ENCODE measurements at regions of chr17 and their contacts with region 1.

Region 1: DNA sequence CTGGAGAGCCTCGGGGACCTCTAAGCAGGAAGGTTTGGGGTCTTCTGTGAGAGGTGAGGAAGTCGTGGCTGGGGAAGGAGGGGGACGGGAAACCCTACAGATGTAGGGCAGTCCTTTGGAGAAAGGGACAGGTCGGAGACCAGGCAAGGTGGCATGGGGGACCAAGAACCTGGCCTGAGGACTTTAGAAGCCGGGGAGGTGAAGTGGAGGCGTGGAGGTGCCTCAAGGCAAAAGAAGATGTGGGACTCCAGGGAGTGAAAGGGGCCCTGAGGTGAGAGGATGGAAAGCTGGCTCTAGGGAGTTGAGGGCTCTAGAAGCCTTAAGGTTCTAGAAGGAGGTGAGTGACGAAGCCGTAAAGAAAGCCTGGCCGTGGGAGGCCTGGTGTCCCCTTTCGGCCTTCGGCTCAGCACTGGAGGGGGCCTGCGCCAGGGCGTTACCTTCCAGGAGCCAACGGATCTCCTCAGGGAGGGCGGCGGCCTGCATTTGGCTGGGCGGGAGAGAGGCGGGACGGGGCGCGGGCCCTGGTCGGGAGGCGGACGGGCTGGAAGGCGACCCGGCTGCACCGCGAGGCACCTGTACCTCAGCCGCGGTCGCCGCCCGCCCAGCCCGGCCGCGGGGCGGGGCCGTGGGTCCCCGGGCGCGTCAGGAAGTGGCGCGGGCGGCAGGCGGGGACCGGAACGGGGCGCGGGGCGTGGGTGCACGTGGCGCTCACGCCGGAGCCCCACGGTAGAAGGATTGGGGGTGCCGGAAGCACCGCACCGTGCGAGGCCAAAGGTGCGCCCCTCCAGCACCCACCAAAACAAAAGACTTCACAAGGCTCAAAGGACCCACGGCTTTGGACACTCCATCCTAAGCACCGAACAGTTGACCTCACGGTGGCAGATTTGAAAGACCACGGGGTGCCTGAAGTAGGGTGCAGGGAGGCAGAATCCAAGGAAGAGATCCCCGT is at the start of gene SKAP1:
- DNase-seq: peak; percentile 60
- H3K4me3 Mint-ChIP-seq: peak within 1 kb of the TSS; percentile 95
- H3K27ac Mint-ChIP-seq: peak within 1 kb of the TSS; percentile 96
- H3K4me1 Mint-ChIP-seq: peaks cover 65% of the 10 kb centered on the region
- H3K27me3 Mint-ChIP-seq: no peaks in the 10 kb centered on the region
- total RNA-seq, gene SKAP1: 60.3 to 60.5 TPM

Region 2: DNA sequence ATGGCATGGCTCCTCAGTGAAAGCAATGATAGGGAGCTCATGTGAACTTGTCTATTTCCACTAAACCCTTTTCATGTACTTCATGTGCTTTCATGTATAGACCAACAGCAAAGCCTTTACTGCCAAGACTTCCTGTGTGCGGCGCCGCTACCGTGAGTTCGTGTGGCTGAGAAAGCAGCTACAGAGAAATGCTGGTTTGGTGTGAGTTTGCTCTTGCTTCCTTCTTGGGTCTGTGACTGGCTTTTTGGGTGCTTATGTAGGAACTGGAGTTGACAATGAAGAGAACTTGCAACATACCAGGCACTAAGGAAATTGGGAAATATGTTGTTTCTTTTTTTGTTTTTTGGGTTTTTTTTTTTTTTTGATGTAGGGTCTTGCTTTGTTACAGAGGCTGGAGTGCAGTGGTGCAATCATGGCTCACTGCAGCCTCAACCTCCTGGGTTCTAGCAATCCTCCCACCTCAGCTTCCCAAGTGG is 316.7 kb before region 1 on chr17:
- CTCF ChIA-PET with region 1: interaction called, 7 read pairs
- intact Hi-C with region 1: loop called (anchors 5 kb)
- DNase-seq: peak; percentile 79
- H3K4me3 Mint-ChIP-seq: peak overlapping the region; percentile 46
- H3K27ac Mint-ChIP-seq: peak overlapping the region; percentile 94
- H3K4me1 Mint-ChIP-seq: peaks cover 46% of the 10 kb centered on the region
- H3K27me3 Mint-ChIP-seq: no peaks in the 10 kb centered on the region

Region 3: DNA sequence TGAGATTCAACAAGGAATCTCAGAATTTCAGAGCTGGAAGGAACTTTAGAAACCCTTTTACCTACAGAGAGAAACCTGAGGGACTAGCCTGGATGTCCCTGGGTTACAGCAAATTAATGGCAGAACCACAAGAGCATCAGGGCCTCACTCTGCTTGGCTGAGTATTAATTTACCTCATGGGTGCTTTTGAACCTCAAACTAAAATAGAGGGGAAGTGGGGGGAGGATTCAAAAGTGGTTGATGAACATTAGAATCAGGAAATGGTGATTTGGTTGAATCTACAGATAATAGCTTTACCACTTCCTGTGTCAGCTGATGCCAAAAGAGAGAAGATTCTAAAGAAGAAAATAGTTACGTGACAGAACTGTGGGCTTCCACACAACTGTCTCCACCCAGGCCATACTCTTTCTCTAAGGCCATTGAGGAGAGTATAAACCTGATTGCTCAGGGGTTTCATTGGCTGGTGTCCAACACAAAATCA is 11.4 kb after region 1 on chr17:
- CTCF ChIA-PET with region 1: interaction called, 5 read pairs
- intact Hi-C with region 1: loop called (anchors 1 kb)
- DNase-seq: peak; percentile 60
- H3K4me3 Mint-ChIP-seq: peak overlapping the region; percentile 17
- H3K27ac Mint-ChIP-seq: peak overlapping the region; percentile 92
- H3K4me1 Mint-ChIP-seq: peaks cover 93% of the 10 kb centered on the region
- H3K27me3 Mint-ChIP-seq: no peaks in the 10 kb centered on the region

Region 4: DNA sequence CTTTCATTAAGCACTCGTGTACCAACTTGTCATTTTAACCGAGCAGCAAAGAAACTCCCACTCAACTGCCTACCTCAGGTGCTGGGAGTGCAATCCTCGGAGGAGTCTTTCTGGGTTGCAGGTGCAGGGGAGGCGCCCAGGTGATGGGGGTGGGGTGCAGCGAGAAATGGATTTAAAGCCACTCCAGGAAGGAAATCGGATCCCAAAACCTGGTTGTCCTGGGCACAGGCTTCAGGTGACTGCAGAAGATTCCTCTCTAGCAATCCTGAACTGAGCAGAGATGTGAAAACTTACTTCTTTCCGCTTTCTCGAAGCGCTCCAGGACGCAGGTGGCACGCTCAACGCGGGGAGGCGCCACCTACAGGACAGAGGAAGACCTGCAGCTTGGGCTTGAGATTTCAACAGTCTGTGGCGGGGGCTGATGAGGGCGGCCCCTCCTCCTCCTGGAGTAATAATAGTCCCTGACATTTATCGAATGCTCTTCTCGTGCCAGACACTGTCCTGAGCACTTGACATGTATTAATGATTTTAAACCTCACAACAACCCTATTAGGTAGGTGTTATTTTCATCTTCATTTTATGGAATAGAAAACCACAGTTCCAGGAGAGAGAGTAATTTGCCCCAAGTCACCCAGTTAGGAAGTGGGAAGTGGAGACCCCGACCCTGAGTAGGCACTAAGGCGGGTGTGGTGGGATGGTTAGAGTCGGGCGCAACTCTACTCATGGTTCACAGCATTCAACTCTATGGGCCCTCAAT is 27.3 kb after region 1 on chr17:
- CTCF ChIA-PET with region 1: interaction called, 96 read pairs
- intact Hi-C with region 1: loop called (anchors 1 kb)
- DNase-seq: peak; percentile 83
- H3K4me3 Mint-ChIP-seq: peak overlapping the region; percentile 66
- H3K27ac Mint-ChIP-seq: no peak overlapping the region
- H3K4me1 Mint-ChIP-seq: peaks cover 47% of the 10 kb centered on the region
- H3K27me3 Mint-ChIP-seq: no peaks in the 10 kb centered on the region

Measured in activated naive CD4-positive, alpha-beta T cell treated with anti-CD3 and anti-CD28 coated beads for 36 hours (primary cell).